HEK293 (cell line): ENCODE measurements at regions of chr19 and their contacts with region 1.

Region 1: GRCh38 chr19:20051841-20052768 is 12.8 kb upstream of the ZNF682 start:
- H3K4me3 ChIP-seq: peak overlapping the region; percentile 67
- H3K27ac ChIP-seq: no peak overlapping the region
- H3K4me1 ChIP-seq: no peaks in the 10 kb centered on the region
- CTCF ChIP-seq: no peak

Region 2: DNA sequence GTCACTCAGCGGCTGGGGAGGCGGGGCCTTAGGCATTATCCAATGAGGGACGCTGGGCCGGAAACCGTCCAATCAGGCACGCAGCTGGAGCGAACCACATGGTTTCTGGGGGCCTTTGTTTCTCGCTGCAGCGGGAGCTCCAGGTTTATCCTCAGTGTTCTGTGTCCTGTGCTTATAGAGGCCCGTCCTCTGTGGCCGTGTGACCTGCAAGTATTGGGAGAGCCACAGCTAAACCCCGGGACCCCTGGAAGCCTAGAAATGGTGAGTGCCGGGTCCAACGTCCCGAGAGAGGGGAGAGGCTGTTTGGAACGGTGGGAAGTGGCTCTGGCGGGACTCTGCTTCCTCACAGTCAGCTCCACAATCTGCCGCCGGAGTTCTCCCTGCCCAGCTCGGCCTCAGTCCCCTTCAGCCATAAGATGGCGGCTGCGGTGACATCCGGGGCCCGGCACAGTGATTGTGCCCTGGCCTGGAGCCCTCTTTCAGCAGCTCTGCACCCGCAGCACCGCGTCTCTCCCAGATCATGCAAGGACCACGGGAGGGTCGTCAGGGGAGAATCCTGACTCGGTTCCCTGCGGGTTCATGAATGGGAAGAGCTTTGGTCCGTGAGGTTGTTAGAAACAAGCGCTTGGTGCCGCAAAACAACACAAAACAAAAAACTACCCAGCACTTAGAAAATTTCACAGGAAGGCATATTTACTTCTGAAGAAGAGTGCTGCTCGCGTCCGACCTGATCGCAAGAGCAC is 186.2 kb before region 1 on chr19 and contains the start of gene ZNF253:
- CTCF ChIA-PET with region 1: no interaction called
- POLR2A ChIA-PET with region 1: interaction called, 12 read pairs
- H3K4me3 ChIP-seq: peak within 1 kb of the TSS; percentile 52
- H3K27ac ChIP-seq: peak within 1 kb of the TSS; percentile 14; the same call in 1 of the 2 replicates
- H3K4me1 ChIP-seq: no peaks in the 10 kb centered on the region
- CTCF ChIP-seq: no peak

Region 3: DNA sequence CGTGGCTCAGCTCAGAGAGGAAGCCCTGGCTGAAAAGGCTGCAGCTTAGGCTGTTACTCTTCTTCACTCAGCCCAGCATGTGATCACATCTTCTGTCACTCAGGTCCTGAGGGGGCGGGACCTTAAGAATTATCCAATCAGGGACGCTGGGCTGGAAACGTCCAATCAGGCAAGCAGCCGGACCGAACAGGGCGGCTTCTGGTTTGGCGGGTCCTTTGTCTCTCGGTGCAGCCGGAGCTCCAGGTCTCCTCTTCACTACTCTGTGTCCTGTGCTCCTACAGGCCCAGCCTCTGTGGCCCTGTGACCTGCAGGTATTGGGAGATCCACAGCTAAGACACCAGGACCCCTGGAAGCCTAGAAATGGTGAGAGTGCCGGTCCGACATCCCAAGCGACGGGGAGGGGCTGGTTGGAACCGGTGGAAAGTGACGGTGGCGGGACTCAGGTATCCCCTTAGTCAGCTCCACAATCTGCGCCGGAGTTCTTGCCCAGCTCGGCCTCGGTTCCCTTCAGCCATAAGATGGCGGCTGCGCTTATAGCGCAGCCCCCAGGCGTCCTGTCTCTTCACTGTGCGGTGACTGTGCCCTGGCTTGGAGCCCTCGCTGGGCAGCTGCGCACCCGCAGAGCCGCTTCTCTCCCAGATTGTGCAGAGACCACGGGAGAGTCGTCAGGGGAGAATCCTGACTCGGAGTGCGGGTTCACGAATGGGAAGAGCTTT is 151.2 kb before region 1 on chr19 and contains the start of gene ZNF93:
- CTCF ChIA-PET with region 1: no interaction called
- POLR2A ChIA-PET with region 1: interaction called, 12 read pairs
- H3K4me3 ChIP-seq: peak within 1 kb of the TSS; percentile 67
- H3K27ac ChIP-seq: no peak within 1 kb of the TSS
- H3K4me1 ChIP-seq: no peaks in the 10 kb centered on the region
- CTCF ChIP-seq: no peak

Region 4: GRCh38 chr19:20028611-20029010 is 23.5 kb before region 1 on chr19:
- CTCF ChIA-PET with region 1: no interaction called
- POLR2A ChIA-PET with region 1: no interaction called
- H3K4me3 ChIP-seq: no peak overlapping the region
- H3K27ac ChIP-seq: no peak overlapping the region
- H3K4me1 ChIP-seq: no peaks in the 10 kb centered on the region
- CTCF ChIP-seq: no peak

Region 5: DNA sequence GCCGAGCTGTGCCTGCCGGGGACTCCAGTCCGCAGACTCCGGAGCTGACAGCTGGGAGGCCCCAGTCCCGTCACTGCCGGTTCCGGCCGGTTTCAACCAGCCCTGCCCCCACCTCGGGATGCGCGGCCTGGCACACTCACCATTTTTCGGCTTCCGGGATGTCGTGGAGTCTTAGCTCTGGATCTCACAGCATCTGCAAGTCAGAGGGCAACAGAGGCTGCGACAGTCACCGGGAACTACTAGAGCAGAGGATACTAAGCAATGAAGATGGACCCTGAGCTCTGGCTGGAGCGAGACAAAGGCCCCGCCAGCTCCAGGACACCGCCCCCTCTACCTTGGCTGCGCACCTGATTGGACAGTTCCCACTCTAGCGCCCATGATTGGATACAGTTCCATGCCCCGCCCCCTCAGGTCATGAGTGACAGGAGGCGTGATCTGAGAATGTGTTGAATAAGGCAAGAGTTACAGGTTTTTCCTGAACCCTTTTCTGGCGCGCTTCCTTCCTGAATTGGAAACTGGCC is 12.8 kb before region 1 on chr19 and contains the start of gene ZNF682:
- CTCF ChIA-PET with region 1: interaction called, 3 read pairs
- POLR2A ChIA-PET with region 1: interaction called, 104 read pairs
- H3K4me3 ChIP-seq: peak within 1 kb of the TSS; percentile 98
- H3K27ac ChIP-seq: peak within 1 kb of the TSS; percentile 49; the same call in 1 of the 2 replicates
- H3K4me1 ChIP-seq: no peaks in the 10 kb centered on the region
- CTCF ChIP-seq: no peak

Region 6: GRCh38 chr19:20067943-20068342 is 15.8 kb after region 1 on chr19:
- CTCF ChIA-PET with region 1: no interaction called
- POLR2A ChIA-PET with region 1: no interaction called
- H3K4me3 ChIP-seq: no peak overlapping the region
- H3K27ac ChIP-seq: no peak overlapping the region
- H3K4me1 ChIP-seq: no peaks in the 10 kb centered on the region
- CTCF ChIP-seq: no peak

Region 7: DNA sequence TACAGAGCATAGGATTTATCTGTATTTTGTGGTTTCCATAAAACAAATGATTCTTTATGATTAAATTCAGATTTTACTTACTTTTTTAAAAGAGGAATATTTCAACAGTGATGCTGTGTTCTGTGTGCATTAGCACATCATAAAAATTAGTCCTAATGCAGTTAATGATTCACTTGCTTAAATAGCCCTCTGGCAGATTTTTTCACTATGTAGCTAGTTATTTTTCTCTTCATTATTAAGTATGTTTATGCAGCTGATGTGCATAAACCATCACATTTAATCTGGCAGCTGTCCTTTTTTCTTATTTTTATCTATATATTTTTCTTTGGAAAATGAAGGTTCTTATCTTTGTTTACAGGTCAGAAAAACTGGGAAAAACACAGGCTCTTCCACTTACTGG is 242.1 kb after region 1 on chr19:
- CTCF ChIA-PET with region 1: no interaction called
- POLR2A ChIA-PET with region 1: no interaction called
- H3K4me3 ChIP-seq: no peak overlapping the region
- H3K27ac ChIP-seq: no peak overlapping the region
- H3K4me1 ChIP-seq: no peaks in the 10 kb centered on the region
- CTCF ChIP-seq: no peak